ENCODE measurements at regions of chr14 and their contacts with region 1.

Region 1: DNA sequence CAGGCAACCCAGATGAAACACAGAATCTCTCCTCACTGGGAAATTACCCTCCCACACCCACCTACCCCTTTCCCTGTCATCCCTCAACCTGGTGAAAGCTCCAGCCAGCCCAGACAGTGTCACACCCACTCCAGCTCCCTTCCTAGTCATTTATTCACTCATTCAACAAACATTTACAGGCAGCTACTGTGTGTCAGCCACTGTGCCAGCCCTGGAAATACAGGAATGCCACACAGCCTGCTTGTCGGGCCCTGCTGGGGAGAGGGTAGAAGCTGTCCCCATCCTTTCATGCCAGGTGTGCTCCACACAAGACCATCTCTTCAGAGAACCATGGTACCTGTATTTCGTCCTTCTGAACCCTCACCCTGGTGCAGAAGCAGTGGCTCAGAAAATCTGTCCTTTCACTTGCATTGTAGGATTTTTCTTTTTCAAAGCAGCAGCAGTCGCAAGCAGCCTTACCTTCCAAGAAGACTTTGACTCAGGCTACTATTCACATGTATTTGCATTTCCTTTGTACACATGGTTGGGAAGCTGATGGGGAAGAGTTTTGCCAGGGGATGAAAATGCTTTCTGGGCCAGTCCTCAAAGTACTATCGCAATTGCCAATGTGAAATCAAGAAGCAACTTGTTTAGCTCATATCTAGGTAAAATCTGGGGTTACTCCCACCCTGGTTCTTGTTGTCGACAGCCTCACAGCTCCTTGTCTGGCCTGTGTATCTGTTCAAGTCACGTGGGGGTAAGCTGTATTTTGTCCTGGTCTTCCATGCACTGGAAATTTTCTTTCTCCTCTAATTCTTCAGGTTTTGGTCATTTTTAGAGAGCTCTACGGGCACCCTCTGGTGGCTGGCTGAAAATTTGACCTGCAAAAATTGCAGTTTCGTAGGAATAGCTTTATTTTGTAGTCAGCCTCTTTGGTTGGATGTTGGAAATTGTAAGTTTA is 147.4 kb upstream of the EGLN3 start:
- DNase-seq: peak; percentile 56
- H3K4me3 ChIP-seq: no peak overlapping the region
- H3K27ac ChIP-seq: no peak overlapping the region
- H3K4me1 ChIP-seq: no peaks in the 10 kb centered on the region
- H3K27me3 ChIP-seq: no peaks in the 10 kb centered on the region
- CTCF ChIP-seq: peak; percentile 64 to 69 (median 65)
- POLR2A ChIP-seq: no peak

Region 2: DNA sequence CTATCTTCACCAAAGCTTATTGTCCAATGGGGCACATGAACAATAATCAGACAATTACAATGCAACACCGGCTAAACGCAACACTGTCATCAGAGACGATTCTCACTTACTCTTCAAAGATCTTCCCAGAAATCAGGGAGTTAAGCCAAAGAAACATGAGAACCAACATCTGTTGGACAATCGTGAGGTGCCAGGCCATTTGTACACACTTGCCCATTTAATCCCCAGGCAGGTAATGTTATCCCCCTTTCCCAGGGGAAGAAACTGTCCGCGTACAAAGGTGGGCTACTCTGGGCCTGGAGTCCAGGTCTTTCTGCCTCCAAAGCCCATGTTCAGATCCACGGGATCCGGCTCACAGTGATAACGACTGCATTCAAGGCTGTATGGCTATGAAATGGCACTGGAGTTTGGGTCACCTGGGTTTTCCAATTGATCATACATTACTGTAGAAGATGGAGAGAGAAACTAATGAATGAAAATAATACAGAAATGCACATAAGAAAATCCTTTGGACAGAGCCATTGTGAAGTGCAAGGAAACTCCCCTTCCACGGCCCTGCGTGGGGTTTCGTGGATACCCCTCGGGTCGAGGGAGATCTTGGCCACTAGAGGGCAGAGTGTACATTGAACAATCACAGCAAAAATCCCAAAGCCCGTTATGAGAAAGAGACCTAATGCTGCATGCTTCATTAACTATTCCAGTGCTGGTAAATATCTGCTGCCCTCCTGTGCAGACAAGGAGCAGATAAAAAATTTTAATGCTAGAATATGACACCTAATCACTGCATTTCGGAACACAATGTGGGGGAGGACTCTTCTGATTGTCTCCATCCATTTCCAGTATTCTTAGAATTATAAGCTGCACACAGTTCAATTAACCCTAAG is 258.9 kb before region 1 on chr14:
- intact Hi-C with region 1: loop called (anchors 5 kb)
- DNase-seq: peak; percentile 68
- H3K4me3 ChIP-seq: no peak overlapping the region
- H3K27ac ChIP-seq: no peak overlapping the region
- H3K4me1 ChIP-seq: no peaks in the 10 kb centered on the region
- H3K27me3 ChIP-seq: no peaks in the 10 kb centered on the region
- CTCF ChIP-seq: peak; percentile 69 to 83 (median 70)
- POLR2A ChIP-seq: no peak